ENCODE measurements at regions of chr22 and their contacts with region 1.

Region 1: GRCh38 chr22:40856513-40857308 is at the starts of genes ST13 and XPNPEP3:
- DNase-seq: peak; percentile 95
- CTCF ChIP-seq: peak; percentile 10

Region 2: DNA sequence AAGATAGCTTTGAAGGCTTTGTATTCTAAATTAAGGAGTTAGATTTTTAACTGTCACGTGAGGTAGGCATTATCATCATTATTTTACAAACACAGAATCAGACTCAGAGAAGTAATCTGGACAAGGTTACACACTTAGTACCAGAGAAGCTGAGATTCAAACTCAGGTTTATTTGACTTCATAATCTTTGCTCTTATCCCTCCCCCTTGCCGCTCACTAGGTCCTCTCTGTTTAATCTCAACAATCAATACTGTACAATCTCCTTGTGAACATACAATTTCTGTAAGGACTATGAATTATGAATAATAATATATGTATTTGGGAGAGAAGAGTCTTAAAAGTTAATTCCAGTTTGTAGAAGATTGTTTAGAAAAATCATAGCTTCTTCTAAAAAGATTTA is 10.4 kb after region 1 on chr22:
- CTCF ChIA-PET with region 1: interaction called, 24 read pairs
- POLR2A ChIA-PET with region 1: no interaction called
- DNase-seq: no peak
- CTCF ChIP-seq: no peak

Measured in GM10248 (cell line).